ENCODE measurements at regions of chr19 and their contacts with region 1.

Region 1: GRCh38 chr19:33795370-33796163 is 1.1 kb upstream of the KCTD15 start:
- DNase-seq: peak; percentile 27
- H3K4me3 Mint-ChIP-seq: peak overlapping the region; percentile 73
- H3K27ac Mint-ChIP-seq: peak overlapping the region; percentile 52
- H3K4me1 Mint-ChIP-seq: no peaks in the 10 kb centered on the region
- H3K27me3 Mint-ChIP-seq: peaks cover 28% of the 10 kb centered on the region

Region 2: GRCh38 chr19:33771384-33772101 is 24.0 kb before region 1 on chr19:
- intact Hi-C with region 1: no loop called
- DNase-seq: peak; percentile 40
- H3K4me3 Mint-ChIP-seq: no peak overlapping the region
- H3K27ac Mint-ChIP-seq: no peak overlapping the region
- H3K4me1 Mint-ChIP-seq: no peaks in the 10 kb centered on the region
- H3K27me3 Mint-ChIP-seq: no peaks in the 10 kb centered on the region

Region 3: GRCh38 chr19:33819880-33820781 is 24.6 kb after region 1 on chr19:
- intact Hi-C with region 1: loop called (anchors 1 kb)
- DNase-seq: peak; percentile 62
- H3K4me3 Mint-ChIP-seq: peak overlapping the region; percentile 80
- H3K27ac Mint-ChIP-seq: peak overlapping the region; percentile 79
- H3K4me1 Mint-ChIP-seq: peaks cover 20% of the 10 kb centered on the region
- H3K27me3 Mint-ChIP-seq: peaks cover 4% of the 10 kb centered on the region

Region 4: DNA sequence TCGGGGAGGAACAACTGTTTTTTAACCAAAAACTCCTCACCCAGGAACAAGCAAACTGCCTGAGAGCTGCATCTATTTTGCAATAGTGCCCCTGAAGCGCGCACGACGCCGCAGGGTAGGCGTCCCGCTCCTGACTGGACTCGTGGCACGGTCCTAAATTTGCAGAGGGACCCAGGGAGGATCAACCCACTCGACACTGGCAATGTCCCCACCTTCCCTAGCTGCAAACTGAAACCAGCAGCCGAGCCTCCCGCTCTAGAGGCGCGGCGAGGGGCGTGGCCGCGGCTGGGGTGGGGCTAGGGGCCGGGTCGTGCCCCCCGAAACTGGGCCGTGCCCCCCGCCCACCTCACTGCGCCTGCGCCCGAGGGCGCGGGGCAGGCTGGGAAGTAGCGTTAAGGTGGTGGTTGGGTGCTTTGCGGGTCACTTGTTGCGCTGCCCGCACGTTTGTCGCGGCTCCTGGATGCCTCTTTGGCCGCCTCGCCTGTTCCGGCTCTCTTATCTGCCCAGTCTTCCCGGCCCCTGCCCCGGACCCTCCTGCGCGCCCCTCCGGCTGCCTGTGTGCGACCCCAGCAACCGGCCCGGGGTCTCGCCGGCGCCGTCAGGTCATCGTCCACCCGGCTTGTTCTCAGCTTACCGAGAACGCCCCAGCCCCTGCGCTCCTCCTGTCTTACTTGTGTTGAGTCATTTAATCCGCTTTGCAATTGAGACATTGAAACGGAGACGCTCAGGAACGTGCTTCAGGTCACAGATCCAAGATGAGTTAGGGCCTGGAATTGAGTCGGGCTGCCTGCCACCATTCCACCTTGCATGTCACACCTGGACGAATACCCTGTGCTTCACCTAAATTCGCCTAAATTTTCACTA is 338.9 kb after region 1 on chr19:
- intact Hi-C with region 1: loop called (anchors 2 kb)
- DNase-seq: peak; percentile 83
- H3K4me3 Mint-ChIP-seq: peak overlapping the region; percentile 88
- H3K27ac Mint-ChIP-seq: peak overlapping the region; percentile 77
- H3K4me1 Mint-ChIP-seq: no peaks in the 10 kb centered on the region
- H3K27me3 Mint-ChIP-seq: peaks cover 10% of the 10 kb centered on the region